Caco-2 (cell line): ENCODE measurements at regions of chr14 and their contacts with region 1.

Region 1: DNA sequence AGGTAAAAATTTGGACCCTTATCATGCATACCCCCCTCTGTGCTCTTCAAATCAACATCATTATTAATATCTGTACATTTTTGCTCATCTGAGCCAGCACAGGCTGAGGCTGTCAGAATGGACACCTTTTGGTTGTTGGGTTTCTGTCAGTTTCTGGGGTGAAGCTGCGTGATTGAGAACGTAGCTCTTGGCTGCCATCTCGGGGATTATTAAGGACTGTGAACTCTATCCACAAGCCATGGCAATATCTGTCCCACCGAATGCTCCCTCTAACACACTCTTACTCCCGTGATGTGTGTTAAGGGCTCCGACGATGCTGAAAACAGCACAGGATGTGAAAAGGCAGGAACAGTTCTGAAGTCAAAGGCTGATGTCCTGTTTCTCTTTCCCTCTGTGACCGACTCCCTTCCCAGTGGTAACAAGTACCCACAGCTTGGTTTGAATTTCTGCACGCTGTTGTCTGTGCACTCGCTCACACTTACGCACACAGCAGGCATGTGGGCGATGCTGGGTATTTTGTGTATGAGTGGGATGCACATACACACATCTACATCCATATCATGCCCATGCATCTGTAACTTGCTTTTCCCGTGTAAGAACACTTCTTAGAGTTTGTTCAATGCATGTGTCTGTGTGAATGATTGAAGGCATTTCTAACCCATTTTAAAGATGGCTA is 405.6 kb downstream of the TMEM121 start:
- DNase-seq: peak in 1 of 2 experiments; percentile 31
- H3K4me3 ChIP-seq: no peak overlapping the region
- H3K4me3 Mint-ChIP-seq: no peak overlapping the region
- H3K27ac Mint-ChIP-seq: no peak overlapping the region
- H3K4me1 ChIP-seq: no peaks in the 10 kb centered on the region
- H3K4me1 Mint-ChIP-seq: no peaks in the 10 kb centered on the region
- H3K27me3 ChIP-seq: peaks cover 2% of the 10 kb centered on the region; the same call in 1 of the 2 replicates
- H3K27me3 Mint-ChIP-seq: peaks cover 19% of the 10 kb centered on the region
- CTCF ChIP-seq: peak in 1 of 2 experiments; percentile 11

Region 2: DNA sequence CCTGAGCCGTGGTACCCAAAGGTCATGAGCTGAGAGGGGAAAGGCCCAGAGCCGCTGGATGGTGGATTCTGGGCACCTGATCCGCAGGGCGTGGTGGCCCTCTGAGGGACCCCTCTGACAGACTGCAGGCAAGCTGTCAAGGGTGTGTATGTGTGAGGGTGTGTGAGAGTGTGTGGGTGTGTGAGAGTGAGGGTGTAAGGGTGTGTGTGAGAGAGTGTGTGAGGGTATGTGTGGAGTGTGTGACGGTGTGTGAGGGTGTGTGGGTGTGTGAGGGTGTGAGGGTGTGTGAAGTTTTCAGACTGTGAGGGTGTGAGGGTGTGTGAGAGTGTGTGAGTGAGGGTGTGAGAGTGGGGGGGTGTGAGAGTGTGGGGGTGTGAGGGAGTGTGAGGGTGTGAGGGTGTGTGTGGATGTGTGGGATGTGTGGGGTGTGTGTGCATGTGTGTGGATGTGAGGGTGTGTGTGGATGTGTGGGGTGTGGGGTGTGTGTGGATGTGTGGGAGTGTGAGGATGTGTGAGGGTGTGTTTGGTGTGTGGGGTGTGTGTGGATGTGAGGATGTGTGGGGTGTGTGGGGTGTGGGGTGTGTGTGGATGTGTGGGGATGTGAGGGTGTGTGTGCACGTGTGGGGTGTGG is 248.9 kb before region 1 on chr14:
- CTCF ChIA-PET with region 1: no interaction called
- POLR2A ChIA-PET with region 1: no interaction called
- intact Hi-C with region 1: loop called (anchors 5 kb)
- DNase-seq: no peak
- H3K4me3 ChIP-seq: no peak overlapping the region
- H3K4me3 Mint-ChIP-seq: no peak overlapping the region
- H3K27ac Mint-ChIP-seq: no peak overlapping the region
- H3K4me1 ChIP-seq: no peaks in the 10 kb centered on the region
- H3K4me1 Mint-ChIP-seq: no peaks in the 10 kb centered on the region
- H3K27me3 ChIP-seq: no peaks in the 10 kb centered on the region
- H3K27me3 Mint-ChIP-seq: no peaks in the 10 kb centered on the region
- CTCF ChIP-seq: no peak